Posterior cingulate gyrus (tissue), 11 donors: ENCODE measurements at regions of chr14 and their contacts with region 1.

Region 1: GRCh38 chr14:95561001-95561412 is 26.2 kb downstream of the GLRX5 start:
- DNase-seq: peak; percentile 80 to 98 (median 92)

Region 2: DNA sequence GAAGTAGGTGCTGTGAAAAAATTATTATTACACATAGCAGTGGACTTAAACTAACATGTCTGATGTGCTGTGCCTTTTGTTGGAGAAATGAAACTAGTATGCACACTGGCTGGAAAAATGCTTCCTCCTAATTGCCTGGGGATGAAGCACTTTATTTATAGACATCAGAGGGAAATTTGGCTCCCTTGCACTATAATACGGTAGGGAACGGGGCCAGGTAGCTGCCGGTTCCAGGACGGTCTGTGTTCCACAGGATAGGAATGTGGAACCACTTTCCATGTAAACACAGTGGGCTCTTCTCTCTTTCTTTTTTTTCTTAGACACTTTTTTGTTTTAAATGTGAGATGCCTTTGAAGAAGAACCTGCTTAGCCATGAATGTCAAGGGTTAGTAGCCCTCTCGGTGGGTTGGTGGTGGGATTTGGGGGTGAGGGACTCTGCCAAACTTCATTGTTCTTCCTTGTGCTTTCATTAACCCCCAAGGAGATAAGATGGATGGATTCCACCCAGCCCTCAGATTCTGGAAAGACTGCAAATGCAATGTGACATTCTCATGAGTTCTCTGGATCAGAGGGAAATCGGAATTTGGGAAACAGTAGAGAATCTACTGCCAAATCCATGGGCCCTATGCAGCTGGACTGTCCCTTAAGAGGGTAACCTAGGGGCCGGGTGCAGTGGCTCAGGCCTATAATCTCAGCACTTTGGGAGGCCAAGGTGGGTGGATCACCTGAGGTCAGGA is 733.1 kb before region 1 on chr14:
- intact Hi-C with region 1: no loop called
- DNase-seq: peak in 1 of 10 donors; percentile 31

Region 3: GRCh38 chr14:95774265-95775160 is 213.5 kb after region 1 on chr14:
- intact Hi-C with region 1: loop called (anchors 1 kb)
- DNase-seq: peak in 4 of 10 donors; percentile 27 to 43 (median 41)

Region 4: GRCh38 chr14:96100161-96101029 is 539.4 kb after region 1 on chr14:
- intact Hi-C with region 1: loop called (anchors 5 kb)
- DNase-seq: peak; percentile 65 to 96 (median 83)

Region 5: GRCh38 chr14:96275177-96276112 is 714.4 kb after region 1 on chr14:
- intact Hi-C with region 1: loop called (anchors 10 kb)
- DNase-seq: peak; percentile 69 to 97 (median 87)